Activated T-helper 1 cell treated with anti-CD3 and anti-CD28 coated beads, Interleukin-12 subunit alpha, Interleukin-12 subunit beta, Interleukin-2, Interleukin-4 antibody, amounts not matched to agents 30 ng/mL and 10 ng/mL and 1 ng/mL, durations not matched to agents 14 hours and 24 hours and 36 hours (primary cell): ENCODE measurements at regions of chr5 and their contacts with region 1.

Region 1: DNA sequence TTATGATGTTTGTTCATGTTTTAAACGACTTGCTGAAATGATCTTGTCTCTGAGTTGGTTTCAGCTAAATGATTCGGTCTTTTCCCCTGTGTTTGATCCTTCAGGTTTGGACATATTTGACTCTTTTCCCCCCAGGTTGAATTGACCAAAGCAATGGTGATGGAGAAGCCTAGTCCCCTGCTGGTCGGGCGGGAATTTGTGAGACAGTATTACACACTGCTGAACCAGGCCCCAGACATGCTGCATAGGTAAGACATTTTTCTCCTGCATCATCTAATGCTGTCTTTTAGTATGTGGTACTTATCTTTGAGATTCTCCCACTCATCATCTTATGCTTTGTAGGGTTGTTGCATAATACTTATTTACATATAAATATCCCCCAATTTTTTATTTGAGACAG is 14.7 kb downstream of the G3BP1 start:
- DNase-seq: no peak
- H3K4me3 Mint-ChIP-seq: no peak overlapping the region
- H3K27ac Mint-ChIP-seq: peak overlapping the region; percentile 7
- H3K4me1 Mint-ChIP-seq: peaks cover 27% of the 10 kb centered on the region
- H3K27me3 Mint-ChIP-seq: no peaks in the 10 kb centered on the region

Region 2: DNA sequence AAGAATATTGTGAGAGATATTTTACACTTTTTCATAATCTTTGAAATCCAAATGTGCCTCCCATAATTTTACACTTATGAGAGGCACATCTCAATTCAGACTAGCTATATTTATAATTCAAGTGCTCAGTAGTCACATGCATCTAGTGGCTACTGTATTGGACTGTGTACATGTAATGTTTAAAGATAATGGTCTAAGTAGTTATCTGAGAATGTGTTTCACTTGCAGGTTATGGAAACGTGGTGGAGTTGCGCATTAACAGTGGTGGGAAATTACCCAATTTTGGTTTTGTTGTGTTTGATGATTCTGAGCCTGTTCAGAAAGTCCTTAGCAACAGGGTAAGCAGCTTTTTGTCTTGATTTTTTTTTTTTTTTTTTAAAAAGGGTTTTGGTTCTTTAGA is 14.1 kb after region 1 on chr5:
- intact Hi-C with region 1: loop called (anchors 2 kb)
- DNase-seq: no peak
- H3K4me3 Mint-ChIP-seq: no peak overlapping the region
- H3K27ac Mint-ChIP-seq: peak overlapping the region; percentile 67
- H3K4me1 Mint-ChIP-seq: peaks cover 40% of the 10 kb centered on the region
- H3K27me3 Mint-ChIP-seq: no peaks in the 10 kb centered on the region